Prostate gland (tissue), 2 donors: ENCODE measurements at regions of chr7 and their contacts with region 1.

Region 1: DNA sequence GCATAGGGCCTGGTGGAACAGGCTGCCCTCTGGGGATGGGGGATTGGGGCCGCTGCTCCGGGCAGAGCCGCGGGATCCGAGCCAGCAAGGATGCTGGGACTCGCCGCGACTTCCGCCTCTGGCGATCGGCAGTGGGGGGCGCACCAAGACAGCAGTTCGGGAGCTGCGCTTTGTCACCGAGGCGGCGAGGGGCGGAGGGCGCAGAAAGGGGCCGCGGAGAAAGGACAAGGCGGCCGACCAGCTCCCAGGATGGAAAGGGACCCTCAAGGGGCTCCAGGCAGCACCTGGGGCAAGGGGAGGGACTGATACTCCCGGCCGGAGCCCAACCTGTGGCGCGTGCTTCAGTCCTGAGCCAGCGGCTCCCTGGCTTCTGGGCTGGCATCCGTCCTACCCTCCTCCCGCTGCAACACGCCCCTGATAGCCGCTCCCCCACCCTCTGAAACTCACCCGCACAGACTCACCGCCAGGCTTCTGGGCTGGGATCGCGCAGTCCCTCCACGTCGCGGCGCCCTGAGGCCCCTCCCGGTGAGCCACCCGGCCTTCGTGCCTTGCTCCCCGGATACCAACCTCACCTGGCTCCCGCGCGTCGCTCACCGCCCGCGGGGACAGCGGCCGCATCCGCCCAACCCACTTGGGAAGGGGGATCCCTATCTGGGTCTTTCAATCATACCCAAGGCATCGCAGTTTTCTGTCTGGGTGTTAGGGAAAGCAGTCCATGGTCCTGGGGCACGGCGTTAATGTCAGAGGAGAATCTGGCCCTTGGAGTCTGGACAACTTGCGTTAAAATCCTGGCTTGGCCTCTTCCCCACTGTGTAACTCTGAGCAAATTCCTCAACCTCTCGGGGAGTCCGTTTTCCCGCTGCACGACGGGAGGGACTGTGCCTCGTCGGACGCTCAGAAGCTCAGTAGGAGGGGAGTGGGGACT is 7.0 kb upstream of the EVX1 start:
- DNase-seq: peak; percentile 77
- H3K4me3 ChIP-seq: peak overlapping the region; percentile 48 to 54
- H3K27ac ChIP-seq: peak overlapping the region; percentile 55 to 56
- H3K4me1 ChIP-seq: no peaks in the 10 kb centered on the region
- H3K27me3 ChIP-seq: no peaks in the 10 kb centered on the region
- CTCF ChIP-seq: peak; percentile 39 to 78 (median 68)
- POLR2A ChIP-seq: peak; percentile 18

Region 2: DNA sequence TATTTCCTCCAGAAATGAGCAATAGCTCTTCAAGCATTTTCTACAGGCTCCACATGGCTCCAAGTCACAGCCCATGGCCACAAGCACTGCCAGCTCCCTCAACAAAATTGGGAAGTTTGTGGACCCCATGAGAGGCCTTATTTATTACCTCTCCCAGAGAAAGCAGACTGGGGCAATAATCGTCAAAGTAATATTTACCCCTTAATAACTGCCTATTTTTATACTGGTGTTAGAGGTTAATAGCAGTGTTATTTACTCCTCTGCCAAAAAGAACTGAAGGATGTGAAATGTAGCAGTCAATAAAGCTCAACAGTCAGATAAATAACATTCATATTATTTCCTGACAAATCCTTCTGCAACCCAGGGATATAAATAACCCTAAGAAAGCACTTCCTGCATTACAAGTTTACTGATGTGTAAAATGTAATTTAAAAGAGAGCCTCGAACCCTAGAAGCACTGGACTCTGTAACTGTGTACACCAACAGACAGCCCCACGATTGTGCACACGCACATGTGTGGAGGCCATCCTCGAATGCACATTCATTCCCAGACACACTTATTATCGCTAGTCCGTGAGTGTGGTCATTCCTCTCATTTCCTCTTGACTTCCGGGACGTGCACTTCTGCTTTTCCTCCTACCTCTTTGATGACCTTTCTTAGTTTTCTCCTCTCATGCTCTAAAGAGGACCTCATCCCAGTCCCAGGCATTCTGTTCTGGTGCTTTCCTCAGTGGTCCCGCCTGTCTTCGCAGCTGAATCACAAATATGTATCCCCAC is 164.3 kb after region 1 on chr7:
- intact Hi-C with region 1: loop called (anchors 10 kb)
- DNase-seq: no peak
- H3K4me3 ChIP-seq: no peak overlapping the region
- H3K27ac ChIP-seq: no peak overlapping the region
- H3K4me1 ChIP-seq: no peaks in the 10 kb centered on the region
- H3K27me3 ChIP-seq: no peaks in the 10 kb centered on the region
- CTCF ChIP-seq: no peak
- POLR2A ChIP-seq: no peak

Region 3: DNA sequence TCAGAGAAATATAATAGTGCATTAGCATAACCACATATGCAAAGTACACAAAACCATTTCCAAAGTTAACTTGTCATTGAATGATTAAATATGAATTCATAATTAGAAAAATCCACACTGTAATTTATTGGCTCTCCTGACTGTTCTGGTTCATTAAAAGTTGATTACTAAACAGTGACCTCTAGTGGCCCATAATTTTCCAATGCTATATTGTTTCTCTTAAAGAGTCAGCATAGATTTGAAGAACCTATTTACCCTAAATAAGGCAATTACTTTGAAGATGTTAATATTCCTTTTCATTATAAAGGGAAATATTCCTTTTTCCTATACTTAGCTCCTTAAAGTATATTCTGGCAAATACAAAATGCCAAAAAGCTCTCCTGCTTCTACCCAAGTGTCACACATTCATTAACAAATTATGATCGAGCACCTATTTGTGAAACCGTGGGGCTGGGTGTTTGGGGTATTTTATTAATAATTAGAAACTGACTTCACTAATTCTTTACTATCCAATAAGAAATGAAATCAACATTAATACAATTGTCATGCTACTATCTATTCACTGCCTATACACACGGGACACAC is 340.8 kb after region 1 on chr7:
- intact Hi-C with region 1: loop called (anchors 2 kb)
- DNase-seq: peak; percentile 47
- H3K4me3 ChIP-seq: no peak overlapping the region
- H3K27ac ChIP-seq: no peak overlapping the region
- H3K4me1 ChIP-seq: no peaks in the 10 kb centered on the region
- H3K27me3 ChIP-seq: no peaks in the 10 kb centered on the region
- CTCF ChIP-seq: peak; percentile 33 to 77 (median 71)
- POLR2A ChIP-seq: no peak

Region 4: DNA sequence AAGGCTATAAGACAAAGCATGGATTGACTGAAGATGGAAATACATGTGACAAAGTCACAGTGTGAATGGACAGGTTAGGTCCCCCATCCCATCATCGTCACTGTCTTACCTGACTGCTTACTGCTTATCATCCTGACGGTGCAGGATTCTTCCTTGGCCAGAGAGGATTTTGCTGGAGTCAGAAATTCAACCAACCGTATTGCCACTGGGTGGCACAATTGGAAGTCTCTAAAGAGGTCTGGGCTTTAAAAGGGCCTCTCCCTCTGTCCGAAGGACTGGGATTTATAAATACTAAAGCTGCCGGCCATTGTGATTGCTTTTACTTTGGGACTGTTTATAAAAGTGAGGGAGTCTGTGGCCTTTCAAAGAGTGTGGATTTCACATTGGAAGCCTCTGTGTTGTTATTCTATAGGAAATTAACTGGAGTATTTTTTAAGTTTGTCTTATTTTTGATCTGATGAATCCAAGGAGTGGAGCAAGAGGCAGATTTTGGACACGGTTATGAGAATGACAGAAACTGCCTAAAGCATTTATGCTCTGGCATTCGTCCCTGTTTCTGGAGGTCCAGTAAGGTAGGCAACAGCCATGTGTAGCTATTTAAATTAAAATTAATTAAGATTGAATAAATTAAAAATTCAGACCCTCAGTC is 1063.3 kb after region 1 on chr7:
- intact Hi-C with region 1: no loop called
- DNase-seq: peak; percentile 38
- H3K4me3 ChIP-seq: no peak overlapping the region
- H3K27ac ChIP-seq: no peak overlapping the region
- H3K4me1 ChIP-seq: no peaks in the 10 kb centered on the region
- H3K27me3 ChIP-seq: no peaks in the 10 kb centered on the region
- CTCF ChIP-seq: peak in 3 of 4 experiments; percentile 31 to 60 (median 49)
- POLR2A ChIP-seq: no peak